Sigmoid colon (tissue), 7 donors: ENCODE measurements at regions of chrX and their contacts with region 1.

Region 1: GRCh38 chrX:16695079-16695676 is 17.3 kb downstream of the CTPS2 start:
- DNase-seq: no peak
- H3K4me3 ChIP-seq: no peak overlapping the region
- H3K27ac ChIP-seq: no peak overlapping the region
- H3K4me1 ChIP-seq: no peaks in the 10 kb centered on the region
- H3K27me3 ChIP-seq: no peaks in the 10 kb centered on the region
- CTCF ChIP-seq: peak; percentile 27 to 66 (median 57)
- EP300 ChIP-seq: no peak
- POLR2A ChIP-seq: no peak

Region 2: GRCh38 chrX:15761564-15762191 is 933.5 kb before region 1 on chrX:
- intact Hi-C with region 1: loop called (anchors 10 kb)
- DNase-seq: no peak
- H3K4me3 ChIP-seq: no peak overlapping the region
- H3K27ac ChIP-seq: no peak overlapping the region
- H3K4me1 ChIP-seq: no peaks in the 10 kb centered on the region
- H3K27me3 ChIP-seq: no peaks in the 10 kb centered on the region
- CTCF ChIP-seq: peak in 3 of 4 experiments; percentile 18 to 52 (median 34)
- EP300 ChIP-seq: no peak
- POLR2A ChIP-seq: no peak

Region 3: GRCh38 chrX:16722481-16722880 is 27.3 kb after region 1 on chrX:
- intact Hi-C with region 1: no loop called
- DNase-seq: no peak
- H3K4me3 ChIP-seq: no peak overlapping the region
- H3K27ac ChIP-seq: no peak overlapping the region
- H3K4me1 ChIP-seq: peaks cover 0 to 22% (median 12%) of the 10 kb centered on the region in 4 donors
- H3K27me3 ChIP-seq: no peaks in the 10 kb centered on the region
- CTCF ChIP-seq: no peak
- EP300 ChIP-seq: no peak
- POLR2A ChIP-seq: no peak